Calu3 (cell line): ENCODE measurements at regions of chr12 and their contacts with region 1.

Region 1: DNA sequence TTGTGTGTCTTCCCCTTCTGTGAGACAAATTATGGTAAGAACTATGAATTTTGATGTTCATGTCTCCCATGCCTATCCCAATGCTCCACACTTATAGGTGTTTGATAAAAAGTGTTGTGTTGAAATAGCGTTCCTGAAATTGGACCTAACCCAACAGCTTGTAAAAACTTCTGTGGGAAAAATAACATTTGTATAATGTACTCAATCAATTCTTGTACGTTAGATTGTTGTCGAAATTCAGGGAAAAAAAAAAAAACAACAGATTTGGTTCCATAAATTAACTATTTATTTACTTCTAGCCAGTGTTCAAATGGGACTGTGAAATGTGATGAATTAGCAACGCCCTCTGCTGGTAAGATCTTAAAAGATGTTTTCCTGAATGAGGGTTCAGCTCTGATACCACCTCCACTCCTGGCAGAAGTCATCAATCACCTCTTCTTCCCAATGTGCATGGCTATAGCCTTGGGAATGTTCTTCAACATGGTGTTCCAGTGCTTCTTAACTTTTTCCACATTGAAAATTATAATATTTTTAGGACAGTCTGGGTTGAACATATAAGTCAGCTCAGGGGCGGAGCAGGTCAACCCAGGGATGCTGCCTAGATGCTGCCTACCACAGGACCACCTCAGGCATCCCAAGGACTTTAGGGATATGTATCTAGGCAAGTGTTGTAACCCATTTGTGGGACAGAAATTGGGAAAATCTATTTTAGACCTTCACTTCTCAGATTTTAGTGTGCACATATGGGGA is 170.6 kb downstream of the OTOGL start:
- DNase-seq: peak; percentile 41
- H3K4me3 Mint-ChIP-seq: no peak overlapping the region
- H3K27ac Mint-ChIP-seq: no peak overlapping the region
- H3K4me1 Mint-ChIP-seq: peaks cover 21% of the 10 kb centered on the region
- H3K27me3 Mint-ChIP-seq: no peaks in the 10 kb centered on the region
- CTCF ChIP-seq: peak; percentile 65

Region 2: DNA sequence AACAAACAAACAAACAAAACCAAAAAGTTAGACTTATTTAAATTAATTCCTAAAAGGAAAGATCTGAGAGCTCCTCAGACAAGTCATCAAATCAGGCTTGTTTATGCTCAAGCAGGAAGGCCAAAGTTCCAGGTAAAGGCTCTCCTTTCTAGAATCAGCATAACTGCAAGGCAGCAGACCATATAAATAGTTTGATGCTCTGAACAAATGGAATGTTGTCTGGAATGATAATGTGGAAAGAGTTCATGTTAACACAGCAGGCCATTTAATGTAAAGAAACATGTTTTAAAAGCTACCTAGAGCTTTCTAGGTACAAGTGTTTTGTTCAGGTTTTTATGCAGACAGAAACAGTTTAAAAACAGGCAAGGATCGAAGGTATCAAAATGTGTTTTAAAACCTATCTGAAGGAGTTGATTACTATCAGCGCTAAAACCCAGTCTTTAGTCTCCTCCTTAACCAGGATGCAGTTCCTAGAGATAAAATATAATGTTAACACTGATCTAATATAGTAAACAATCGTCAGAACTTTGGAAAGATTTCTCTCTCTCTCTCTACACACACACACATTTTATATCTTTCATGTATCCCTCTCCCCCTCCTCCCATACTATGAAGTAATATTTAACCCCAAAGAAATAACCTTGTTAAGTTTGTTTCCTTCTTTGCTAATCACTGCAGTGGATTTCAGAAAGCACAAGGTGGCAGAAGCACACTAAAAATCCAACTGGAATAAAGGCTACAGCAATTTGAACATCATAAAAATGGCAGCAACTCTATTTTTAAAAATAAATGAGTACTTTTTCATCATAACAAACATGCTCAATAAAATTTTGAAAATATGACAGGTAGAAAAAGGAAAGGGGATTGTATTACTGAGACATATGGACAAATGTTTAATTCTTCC is 714.7 kb before region 1 on chr12:
- CTCF ChIA-PET with region 1: no interaction called
- intact Hi-C with region 1: loop called (anchors 10 kb)
- DNase-seq: peak; percentile 44
- H3K4me3 Mint-ChIP-seq: no peak overlapping the region
- H3K27ac Mint-ChIP-seq: peak overlapping the region; percentile 59
- H3K4me1 Mint-ChIP-seq: peaks cover 61% of the 10 kb centered on the region
- H3K27me3 Mint-ChIP-seq: no peaks in the 10 kb centered on the region
- CTCF ChIP-seq: peak; percentile 61

Region 3: DNA sequence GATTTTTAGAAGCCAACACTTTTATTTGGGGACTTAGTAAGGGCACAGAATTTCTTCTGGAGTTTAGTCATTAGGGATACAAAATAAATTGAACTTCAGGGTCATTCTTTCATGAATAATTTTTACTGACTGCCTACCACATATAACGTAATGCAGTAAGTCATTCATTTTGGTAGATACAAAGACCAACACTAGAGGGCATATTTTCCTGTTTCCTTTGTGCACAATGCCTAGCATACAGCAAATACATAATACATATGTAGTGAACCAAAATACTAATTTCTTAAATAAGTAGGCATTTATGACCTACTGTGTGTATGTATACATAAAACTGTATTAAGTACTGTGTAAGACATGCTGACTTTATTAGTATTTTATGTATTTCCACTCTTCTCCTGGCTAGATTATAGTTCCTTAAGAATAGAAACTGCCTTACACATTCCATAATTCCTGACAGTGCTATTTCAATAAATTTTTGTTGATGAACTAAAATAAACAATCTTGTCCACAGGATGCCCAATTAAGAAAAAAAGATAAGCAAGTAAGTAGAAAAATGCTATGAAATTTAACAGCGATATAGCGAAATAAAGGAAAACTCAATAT is 383.0 kb before region 1 on chr12:
- CTCF ChIA-PET with region 1: no interaction called
- intact Hi-C with region 1: loop called (anchors 2 kb)
- DNase-seq: no peak
- H3K4me3 Mint-ChIP-seq: no peak overlapping the region
- H3K27ac Mint-ChIP-seq: no peak overlapping the region
- H3K4me1 Mint-ChIP-seq: peaks cover 39% of the 10 kb centered on the region
- H3K27me3 Mint-ChIP-seq: no peaks in the 10 kb centered on the region
- CTCF ChIP-seq: peak; percentile 43

Region 4: DNA sequence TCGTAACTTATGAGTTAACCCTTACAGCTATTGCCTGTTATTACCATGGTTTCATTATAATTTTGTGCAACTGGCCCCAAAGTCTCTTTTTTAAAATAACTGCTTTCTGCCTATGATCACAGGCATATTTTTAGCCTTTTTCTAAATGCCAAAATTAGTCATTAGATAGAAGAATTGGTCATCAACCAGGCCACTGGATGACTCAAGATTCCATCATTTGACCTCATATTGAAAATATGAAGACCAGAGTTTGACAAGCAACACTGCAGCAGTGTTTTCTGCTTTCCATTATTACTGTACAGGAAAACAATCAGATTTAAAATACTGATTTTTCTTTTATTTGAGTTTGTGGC is 225.3 kb before region 1 on chr12:
- CTCF ChIA-PET with region 1: no interaction called
- intact Hi-C with region 1: loop called (anchors 10 kb)
- DNase-seq: no peak
- H3K4me3 Mint-ChIP-seq: no peak overlapping the region
- H3K27ac Mint-ChIP-seq: no peak overlapping the region
- H3K4me1 Mint-ChIP-seq: no peaks in the 10 kb centered on the region
- H3K27me3 Mint-ChIP-seq: no peaks in the 10 kb centered on the region
- CTCF ChIP-seq: no peak

Region 5: DNA sequence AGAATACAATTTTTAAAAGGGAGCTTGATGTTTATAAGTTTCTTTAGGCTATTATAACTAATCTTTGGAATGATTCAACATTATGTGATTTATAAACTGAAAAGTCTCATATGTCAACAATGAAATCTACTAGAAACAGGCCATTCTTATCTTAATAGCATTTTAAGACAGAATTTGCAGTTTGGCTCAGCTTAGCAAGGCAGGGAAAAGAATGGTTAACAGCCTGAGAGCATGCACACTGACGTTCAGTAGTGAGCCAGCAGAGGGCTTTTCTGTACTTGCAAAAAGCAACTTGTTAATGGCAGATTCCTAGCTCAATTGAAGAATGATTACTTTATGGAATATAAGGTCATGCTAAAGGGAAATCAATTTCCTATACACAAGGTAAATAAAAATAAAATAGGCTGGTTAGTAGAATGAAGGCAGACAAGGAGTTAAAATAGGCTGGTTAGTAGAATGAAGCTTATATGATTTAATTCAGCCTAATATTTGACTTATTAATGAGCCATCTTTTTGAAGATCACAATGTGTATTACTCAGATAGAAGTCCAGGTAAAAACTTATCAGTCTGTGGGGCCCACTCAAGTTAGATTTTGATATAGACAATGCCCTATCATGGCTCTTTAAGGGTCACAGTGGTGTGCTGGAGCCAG is 74.8 kb before region 1 on chr12:
- CTCF ChIA-PET with region 1: interaction called, 38 read pairs
- intact Hi-C with region 1: loop called (anchors 1 kb)
- DNase-seq: peak; percentile 48
- H3K4me3 Mint-ChIP-seq: no peak overlapping the region
- H3K27ac Mint-ChIP-seq: no peak overlapping the region
- H3K4me1 Mint-ChIP-seq: no peaks in the 10 kb centered on the region
- H3K27me3 Mint-ChIP-seq: no peaks in the 10 kb centered on the region
- CTCF ChIP-seq: peak; percentile 51

Region 6: DNA sequence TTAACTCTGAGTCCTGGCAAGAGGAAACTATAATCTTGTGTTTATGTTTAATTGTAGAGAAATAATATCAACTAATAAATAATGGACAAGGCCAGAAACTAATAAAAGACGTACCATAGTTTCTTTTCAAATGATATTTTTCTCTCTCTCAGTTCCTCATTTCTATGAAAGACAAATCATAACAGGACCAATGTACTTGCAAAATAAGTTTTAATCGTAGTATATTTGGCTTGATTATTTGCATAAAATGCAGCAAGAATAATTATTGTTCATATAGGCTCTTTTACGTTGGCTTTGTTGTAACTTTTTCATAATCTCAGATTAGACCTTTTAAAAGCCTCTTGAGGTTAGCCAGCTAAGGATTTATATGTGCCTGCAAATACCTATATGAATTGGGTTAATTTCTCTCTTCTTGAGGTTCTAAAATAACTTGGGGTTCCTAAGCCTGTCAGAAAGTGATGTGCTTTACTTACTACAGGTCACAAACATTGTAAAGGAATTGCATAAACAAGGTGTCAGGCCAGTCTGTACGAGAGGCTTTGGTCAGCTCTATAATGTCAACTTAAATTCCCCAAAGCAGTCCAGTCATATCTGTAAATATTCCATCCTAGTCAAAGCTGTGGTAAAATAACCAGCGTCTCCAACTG is 21.3 kb after region 1 on chr12:
- CTCF ChIA-PET with region 1: no interaction called
- intact Hi-C with region 1: no loop called
- DNase-seq: no peak
- H3K4me3 Mint-ChIP-seq: no peak overlapping the region
- H3K27ac Mint-ChIP-seq: no peak overlapping the region
- H3K4me1 Mint-ChIP-seq: no peaks in the 10 kb centered on the region
- H3K27me3 Mint-ChIP-seq: no peaks in the 10 kb centered on the region
- CTCF ChIP-seq: no peak

Region 7: GRCh38 chr12:80445083-80445793 is 175.3 kb after region 1 on chr12:
- CTCF ChIA-PET with region 1: no interaction called
- intact Hi-C with region 1: no loop called
- DNase-seq: no peak
- H3K4me3 Mint-ChIP-seq: no peak overlapping the region
- H3K27ac Mint-ChIP-seq: no peak overlapping the region
- H3K4me1 Mint-ChIP-seq: peaks cover 13% of the 10 kb centered on the region
- H3K27me3 Mint-ChIP-seq: no peaks in the 10 kb centered on the region
- CTCF ChIP-seq: no peak